CD4-positive, alpha-beta T cell (primary cell): ENCODE measurements at regions of chr10 and their contacts with region 1.

Region 1: GRCh38 chr10:43138021-43138756 is at the start of gene CSGALNACT2:
- DNase-seq: peak; percentile 75 to 95 (median 86)
- ATAC-seq: peak; percentile 66
- H3K4me3 ChIP-seq: peak within 1 kb of the TSS; percentile 95
- H3K4me3 Mint-ChIP-seq: peak within 1 kb of the TSS; percentile 96
- H3K27ac ChIP-seq: peak within 1 kb of the TSS; percentile 86 to 88
- H3K27ac Mint-ChIP-seq: peak within 1 kb of the TSS; percentile 96
- H3K4me1 ChIP-seq: peaks cover 34% of the 10 kb centered on the region
- H3K4me1 Mint-ChIP-seq: peaks cover 47% of the 10 kb centered on the region
- H3K27me3 ChIP-seq: no peaks in the 10 kb centered on the region
- H3K27me3 Mint-ChIP-seq: no peaks in the 10 kb centered on the region
- CTCF ChIP-seq: no peak
- total RNA-seq, gene CSGALNACT2: 59.4 to 60.9 TPM

Region 2: GRCh38 chr10:42552493-42553407 is 585.4 kb before region 1 on chr10:
- CTCF ChIA-PET with region 1: no interaction called
- POLR2A ChIA-PET with region 1: no interaction called
- intact Hi-C with region 1: loop called (anchors 5 to 10 kb)
- DNase-seq: peak; percentile 87 to 97 (median 94)
- ATAC-seq: peak; percentile 95
- H3K4me3 ChIP-seq: peak overlapping the region; percentile 85
- H3K4me3 Mint-ChIP-seq: peak overlapping the region; percentile 94
- H3K27ac ChIP-seq: peak overlapping the region; percentile 58 to 75
- H3K27ac Mint-ChIP-seq: peak overlapping the region; percentile 87
- H3K4me1 ChIP-seq: peaks cover 23% of the 10 kb centered on the region
- H3K4me1 Mint-ChIP-seq: peaks cover 46% of the 10 kb centered on the region
- H3K27me3 ChIP-seq: no peaks in the 10 kb centered on the region
- H3K27me3 Mint-ChIP-seq: no peaks in the 10 kb centered on the region
- CTCF ChIP-seq: no peak

Region 3: GRCh38 chr10:42933448-42934340 is 204.5 kb before region 1 on chr10:
- CTCF ChIA-PET with region 1: no interaction called
- POLR2A ChIA-PET with region 1: interaction called, 7 read pairs
- intact Hi-C with region 1: loop called in 1 of 2 experiments (anchors 10 kb)
- DNase-seq: peak in 8 of 14 experiments; percentile 12 to 74 (median 59)
- ATAC-seq: peak; percentile 65
- H3K4me3 ChIP-seq: peak overlapping the region; percentile 55
- H3K4me3 Mint-ChIP-seq: peak overlapping the region; percentile 87
- H3K27ac ChIP-seq: peak overlapping the region in 1 of 2 donors; percentile 35
- H3K27ac Mint-ChIP-seq: peak overlapping the region; percentile 89
- H3K4me1 ChIP-seq: peaks cover 24% of the 10 kb centered on the region
- H3K4me1 Mint-ChIP-seq: peaks cover 16% of the 10 kb centered on the region
- H3K27me3 ChIP-seq: peaks cover 11 to 27% of the 10 kb centered on the region in 2 experiments
- H3K27me3 Mint-ChIP-seq: peaks cover 16% of the 10 kb centered on the region
- CTCF ChIP-seq: no peak

Region 4: GRCh38 chr10:43151371-43151770 is 13.2 kb after region 1 on chr10:
- CTCF ChIA-PET with region 1: interaction called, 4 read pairs
- POLR2A ChIA-PET with region 1: interaction called, 12 read pairs
- intact Hi-C with region 1: no loop called
- DNase-seq: no peak
- ATAC-seq: no peak
- H3K4me3 ChIP-seq: no peak overlapping the region
- H3K4me3 Mint-ChIP-seq: peak overlapping the region; percentile 47
- H3K27ac ChIP-seq: no peak overlapping the region
- H3K27ac Mint-ChIP-seq: no peak overlapping the region
- H3K4me1 ChIP-seq: peaks cover 4% of the 10 kb centered on the region
- H3K4me1 Mint-ChIP-seq: peaks cover 77% of the 10 kb centered on the region
- H3K27me3 ChIP-seq: no peaks in the 10 kb centered on the region
- H3K27me3 Mint-ChIP-seq: no peaks in the 10 kb centered on the region
- CTCF ChIP-seq: no peak

Region 5: GRCh38 chr10:43361986-43362839 is 224.0 kb after region 1 on chr10:
- CTCF ChIA-PET with region 1: no interaction called
- POLR2A ChIA-PET with region 1: interaction called, 6 read pairs
- intact Hi-C with region 1: loop called in 1 of 2 experiments (anchors 2 kb)
- DNase-seq: peak; percentile 93 to 99 (median 98)
- ATAC-seq: peak; percentile 98
- H3K4me3 ChIP-seq: peak overlapping the region; percentile 82
- H3K4me3 Mint-ChIP-seq: peak overlapping the region; percentile 97
- H3K27ac ChIP-seq: peak overlapping the region; percentile 88 to 97
- H3K27ac Mint-ChIP-seq: peak overlapping the region; percentile 97
- H3K4me1 ChIP-seq: peaks cover 22% of the 10 kb centered on the region
- H3K4me1 Mint-ChIP-seq: peaks cover 32% of the 10 kb centered on the region
- H3K27me3 ChIP-seq: no peaks in the 10 kb centered on the region
- H3K27me3 Mint-ChIP-seq: no peaks in the 10 kb centered on the region
- CTCF ChIP-seq: peak; percentile 64

Region 6: GRCh38 chr10:43648398-43649184 is 510.4 kb after region 1 on chr10 and contains the start of gene ZNF32:
- CTCF ChIA-PET with region 1: no interaction called
- POLR2A ChIA-PET with region 1: no interaction called
- intact Hi-C with region 1: loop called in 1 of 2 experiments (anchors 5 kb)
- DNase-seq: peak; percentile 64 to 91 (median 76)
- ATAC-seq: peak; percentile 98
- H3K4me3 ChIP-seq: peak within 1 kb of the TSS; percentile 73
- H3K4me3 Mint-ChIP-seq: peak within 1 kb of the TSS; percentile 96
- H3K27ac ChIP-seq: peak within 1 kb of the TSS in 1 of 2 donors; percentile 71
- H3K27ac Mint-ChIP-seq: peak within 1 kb of the TSS; percentile 96
- H3K4me1 ChIP-seq: peaks cover 17% of the 10 kb centered on the region
- H3K4me1 Mint-ChIP-seq: peaks cover 27% of the 10 kb centered on the region
- H3K27me3 ChIP-seq: no peaks in the 10 kb centered on the region
- H3K27me3 Mint-ChIP-seq: peaks cover 3% of the 10 kb centered on the region
- CTCF ChIP-seq: no peak
- total RNA-seq, gene ZNF32: 18.7 to 19.5 TPM

Region 7: DNA sequence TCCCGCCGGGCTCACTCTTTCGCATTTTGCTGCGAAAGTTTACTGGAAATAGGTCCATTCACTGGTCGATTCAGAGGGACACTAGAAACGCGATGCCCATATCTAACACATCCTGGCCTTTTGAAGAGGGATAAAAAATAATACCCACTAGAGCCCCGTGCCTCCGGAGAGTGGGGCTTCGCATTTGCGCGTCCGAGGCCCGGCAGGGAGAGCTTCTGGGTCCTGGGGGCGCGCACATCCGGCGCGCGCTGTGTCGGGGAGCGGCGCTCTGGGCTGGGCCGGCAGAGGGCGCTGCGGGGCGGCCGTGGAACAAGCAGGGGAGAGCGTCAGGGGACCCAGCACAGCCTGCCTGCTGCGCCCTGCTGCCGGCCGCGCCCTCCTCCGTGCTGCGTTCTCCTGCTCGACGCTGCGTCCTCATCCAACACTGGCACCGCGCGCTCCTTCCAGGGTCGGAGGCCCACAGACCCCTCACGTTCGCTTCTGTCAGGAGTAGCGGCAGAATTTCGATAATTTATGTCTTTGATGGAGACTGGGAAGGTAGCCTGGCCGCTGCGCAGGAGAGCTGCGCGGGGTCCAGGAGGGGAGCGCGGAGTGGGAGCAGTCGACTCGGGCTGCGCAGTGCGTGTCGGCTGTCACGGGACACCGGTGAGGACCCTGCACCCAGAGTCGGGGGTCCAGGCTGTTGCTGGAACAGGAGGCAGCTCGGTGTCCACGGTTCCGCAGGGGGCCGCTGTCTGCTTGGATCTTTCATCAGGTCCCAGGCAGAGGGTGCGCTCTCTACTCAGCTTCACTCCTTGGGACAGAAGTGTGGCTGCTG is 552.0 kb after region 1 on chr10:
- CTCF ChIA-PET with region 1: no interaction called
- POLR2A ChIA-PET with region 1: no interaction called
- intact Hi-C with region 1: no loop called
- DNase-seq: peak; percentile 67 to 90 (median 82)
- ATAC-seq: peak; percentile 99
- H3K4me3 ChIP-seq: peak overlapping the region; percentile 76
- H3K4me3 Mint-ChIP-seq: peak overlapping the region; percentile 88
- H3K27ac ChIP-seq: no peak overlapping the region
- H3K27ac Mint-ChIP-seq: no peak overlapping the region
- H3K4me1 ChIP-seq: peaks cover 14% of the 10 kb centered on the region
- H3K4me1 Mint-ChIP-seq: peaks cover 6% of the 10 kb centered on the region
- H3K27me3 ChIP-seq: peaks cover 7 to 12% of the 10 kb centered on the region in 2 experiments
- H3K27me3 Mint-ChIP-seq: peaks cover 26% of the 10 kb centered on the region
- CTCF ChIP-seq: peak; percentile 81

Region 8: DNA sequence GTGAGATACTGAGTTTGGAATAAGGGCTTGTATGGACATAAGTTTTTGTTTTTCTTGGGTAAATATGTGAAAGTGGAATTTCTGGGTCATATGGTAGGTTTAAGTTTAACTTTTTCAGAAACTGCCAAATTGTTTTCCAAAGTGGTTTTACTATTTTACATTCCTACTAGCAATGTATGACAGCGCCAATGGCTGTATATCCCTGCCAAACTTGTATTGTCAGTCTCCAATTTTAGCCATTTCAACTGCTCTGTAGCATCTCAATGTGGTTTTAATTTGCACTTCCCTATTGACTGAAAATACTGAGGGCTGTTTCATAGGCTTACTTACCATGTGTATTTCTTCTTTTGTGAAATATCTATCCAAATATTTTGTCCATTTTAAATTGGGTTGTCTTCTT is 601.0 kb after region 1 on chr10:
- CTCF ChIA-PET with region 1: no interaction called
- POLR2A ChIA-PET with region 1: no interaction called
- intact Hi-C with region 1: no loop called
- DNase-seq: no peak
- ATAC-seq: no peak
- H3K4me3 ChIP-seq: no peak overlapping the region
- H3K4me3 Mint-ChIP-seq: no peak overlapping the region
- H3K27ac ChIP-seq: no peak overlapping the region
- H3K27ac Mint-ChIP-seq: no peak overlapping the region
- H3K4me1 ChIP-seq: no peaks in the 10 kb centered on the region
- H3K4me1 Mint-ChIP-seq: no peaks in the 10 kb centered on the region
- H3K27me3 ChIP-seq: no peaks in the 10 kb centered on the region
- H3K27me3 Mint-ChIP-seq: no peaks in the 10 kb centered on the region
- CTCF ChIP-seq: no peak